Activated CD4-positive, alpha-beta T cell treated with anti-CD3 and anti-CD28 coated beads, Interleukin-2, amount 10 ng/mL, durations not matched to agents 24 days and 14 days (primary cell): ENCODE measurements at regions of chr3 and their contacts with region 1.

Region 1: DNA sequence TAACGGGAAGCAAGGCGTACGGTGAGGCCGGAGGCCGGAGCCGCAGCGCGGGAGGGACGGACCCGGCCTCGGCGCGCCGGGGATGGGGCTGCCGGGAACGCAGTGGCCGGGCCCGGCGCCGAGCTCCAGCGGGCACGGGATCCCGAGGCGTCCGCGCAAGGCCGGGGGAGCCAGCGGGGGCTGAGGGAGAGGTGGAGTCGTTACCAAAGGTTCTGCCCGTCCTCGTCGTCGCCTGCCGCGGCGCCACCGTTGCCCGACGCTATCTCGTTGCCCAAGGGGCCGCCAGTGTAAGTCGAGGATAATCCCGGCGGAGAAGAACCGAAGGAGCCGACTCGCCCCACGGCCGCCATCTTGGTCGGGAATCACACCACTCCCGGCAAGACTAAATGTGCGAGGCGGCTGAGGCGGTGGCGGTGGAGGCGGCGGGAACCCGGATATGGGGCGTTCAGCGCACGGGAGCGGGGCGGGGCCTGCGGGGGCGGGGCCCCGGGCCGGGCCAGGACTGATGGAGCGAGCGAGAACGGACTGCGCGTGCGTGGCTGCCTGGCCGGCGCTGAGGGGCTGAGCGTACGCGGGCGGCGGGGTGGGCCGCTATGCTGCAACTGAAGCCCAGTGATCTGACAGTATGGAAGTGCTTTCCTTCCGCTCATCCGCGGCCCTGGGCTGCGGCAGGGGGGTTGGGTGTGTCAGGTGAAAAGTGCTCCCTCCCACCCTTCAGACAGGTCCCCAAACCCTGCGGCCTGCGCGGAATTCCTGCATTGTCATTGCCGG is at the start of gene DYNC1LI1:
- DNase-seq: peak; percentile 97
- H3K4me3 Mint-ChIP-seq: peak within 1 kb of the TSS; percentile 88
- H3K27ac Mint-ChIP-seq: peak within 1 kb of the TSS; percentile 92
- H3K4me1 Mint-ChIP-seq: peaks cover 20% of the 10 kb centered on the region
- H3K27me3 Mint-ChIP-seq: no peaks in the 10 kb centered on the region
- total RNA-seq, gene DYNC1LI1: 35.4 and 40.1 TPM in 2 replicates

Region 2: GRCh38 chr3:32106280-32106928 is 464.2 kb before region 1 on chr3 and contains the start of gene GPD1L:
- intact Hi-C with region 1: loop called (anchors 10 kb)
- DNase-seq: peak; percentile 98
- H3K4me3 Mint-ChIP-seq: peak within 1 kb of the TSS; percentile 94
- H3K27ac Mint-ChIP-seq: peak within 1 kb of the TSS; percentile 90
- H3K4me1 Mint-ChIP-seq: peaks cover 32% of the 10 kb centered on the region
- H3K27me3 Mint-ChIP-seq: no peaks in the 10 kb centered on the region
- total RNA-seq, gene GPD1L: 19.0 and 20.0 TPM in 2 replicates

Region 3: GRCh38 chr3:32391643-32392535 is 178.7 kb before region 1 on chr3 and contains the start of gene CMTM7:
- intact Hi-C with region 1: loop called (anchors 5 kb)
- DNase-seq: peak; percentile 92
- H3K4me3 Mint-ChIP-seq: peak within 1 kb of the TSS; percentile 90
- H3K27ac Mint-ChIP-seq: peak within 1 kb of the TSS; percentile 99
- H3K4me1 Mint-ChIP-seq: peaks cover 46% of the 10 kb centered on the region
- H3K27me3 Mint-ChIP-seq: no peaks in the 10 kb centered on the region
- total RNA-seq, gene CMTM7: 45.0 and 46.3 TPM in 2 replicates

Region 4: GRCh38 chr3:32502118-32502945 is 68.3 kb before region 1 on chr3 and contains the start of gene CMTM6:
- intact Hi-C with region 1: loop called (anchors 2 kb)
- DNase-seq: peak; percentile 92
- H3K4me3 Mint-ChIP-seq: peak within 1 kb of the TSS; percentile 90
- H3K27ac Mint-ChIP-seq: peak within 1 kb of the TSS; percentile 86
- H3K4me1 Mint-ChIP-seq: peaks cover 28% of the 10 kb centered on the region
- H3K27me3 Mint-ChIP-seq: peaks cover 2% of the 10 kb centered on the region
- total RNA-seq, gene CMTM6: 79.3 and 79.6 TPM in 2 replicates

Region 5: DNA sequence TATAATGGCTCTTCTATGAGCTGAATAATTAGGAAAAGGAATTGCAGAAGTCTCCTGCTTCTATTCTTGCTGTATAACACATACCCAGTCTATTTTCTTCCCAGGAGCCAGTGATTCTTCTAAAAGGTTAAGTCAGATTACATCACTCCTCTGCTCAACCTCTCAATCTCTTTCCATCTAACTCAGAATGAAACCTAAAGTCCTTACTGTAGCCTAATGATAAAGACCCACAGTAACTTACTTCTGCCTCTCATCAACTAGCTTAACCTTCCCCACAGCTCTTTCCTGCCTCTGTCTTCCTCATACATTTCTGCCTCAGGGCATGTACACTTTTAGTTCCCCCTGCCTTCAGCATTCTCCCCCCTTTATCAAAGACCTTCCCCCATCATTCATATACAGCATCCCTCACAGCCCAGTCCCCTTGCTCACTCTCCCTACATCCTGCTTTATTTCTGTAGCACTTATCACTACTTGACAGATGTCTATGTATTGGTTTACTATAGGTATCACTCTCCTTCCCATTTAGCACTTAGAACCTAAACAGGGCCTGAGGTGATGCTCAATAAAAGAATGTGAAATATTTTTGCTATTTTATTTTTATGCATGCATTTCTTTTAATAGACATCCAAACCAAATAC is 39.5 kb before region 1 on chr3:
- intact Hi-C with region 1: loop called (anchors 5 kb)
- DNase-seq: no peak
- H3K4me3 Mint-ChIP-seq: no peak overlapping the region
- H3K27ac Mint-ChIP-seq: peak overlapping the region; percentile 52
- H3K4me1 Mint-ChIP-seq: peaks cover 8% of the 10 kb centered on the region
- H3K27me3 Mint-ChIP-seq: no peaks in the 10 kb centered on the region

Region 6: DNA sequence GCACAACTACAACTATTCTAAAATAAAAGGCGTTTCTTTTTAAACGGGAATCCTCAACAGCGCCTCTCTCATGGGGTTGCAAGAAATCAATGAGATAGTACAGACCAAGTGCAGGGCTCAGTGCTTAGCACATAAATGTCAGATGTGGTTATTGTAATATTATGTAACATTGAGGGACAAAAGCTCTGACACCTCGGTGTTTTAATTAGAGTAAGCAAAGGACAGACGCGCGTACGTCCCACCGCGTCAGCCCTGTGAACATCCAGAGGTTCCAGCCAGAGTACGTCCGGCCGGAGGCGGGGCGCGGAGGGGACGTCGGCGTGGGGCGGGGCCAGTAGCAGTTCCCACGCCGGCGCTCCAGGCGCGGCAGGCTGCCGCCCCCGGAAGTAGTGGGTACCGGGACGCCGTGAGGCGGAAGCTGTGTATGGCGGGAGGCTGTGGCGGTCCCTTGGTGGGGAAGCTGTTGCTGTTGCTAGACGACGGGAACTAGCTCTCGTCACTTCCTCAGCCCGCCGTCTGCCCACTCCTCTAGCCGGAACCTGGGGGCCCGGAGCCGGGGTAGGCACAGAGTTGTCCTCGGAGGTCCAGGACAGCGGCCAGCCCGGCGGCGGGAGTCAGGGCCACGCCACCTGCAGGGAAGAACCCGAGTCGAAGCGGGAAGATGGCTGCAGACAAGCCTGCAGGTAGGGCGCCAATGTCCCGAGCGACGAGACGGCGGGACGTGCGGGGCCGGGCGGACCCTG is 114.4 kb after region 1 on chr3 and contains the start of gene CNOT10:
- intact Hi-C with region 1: loop called (anchors 1 kb)
- DNase-seq: peak; percentile 99
- H3K4me3 Mint-ChIP-seq: peak within 1 kb of the TSS; percentile 95
- H3K27ac Mint-ChIP-seq: peak within 1 kb of the TSS; percentile 96
- H3K4me1 Mint-ChIP-seq: peaks cover 27% of the 10 kb centered on the region
- H3K27me3 Mint-ChIP-seq: no peaks in the 10 kb centered on the region
- total RNA-seq, gene CNOT10: 61.0 and 74.4 TPM in 2 replicates